Colonic mucosa (tissue), 4 donors: ENCODE measurements at regions of chr11 and their contacts with region 1.

Region 1: GRCh38 chr11:62905927-62906531 is 15.1 kb downstream of the CHRM1 start:
- DNase-seq: peak; percentile 86
- H3K4me3 ChIP-seq: no peak overlapping the region
- H3K27ac ChIP-seq: no peak overlapping the region
- H3K4me1 ChIP-seq: no peaks in the 10 kb centered on the region
- H3K27me3 ChIP-seq: no peaks in the 10 kb centered on the region
- CTCF ChIP-seq: peak; percentile 99

Region 2: DNA sequence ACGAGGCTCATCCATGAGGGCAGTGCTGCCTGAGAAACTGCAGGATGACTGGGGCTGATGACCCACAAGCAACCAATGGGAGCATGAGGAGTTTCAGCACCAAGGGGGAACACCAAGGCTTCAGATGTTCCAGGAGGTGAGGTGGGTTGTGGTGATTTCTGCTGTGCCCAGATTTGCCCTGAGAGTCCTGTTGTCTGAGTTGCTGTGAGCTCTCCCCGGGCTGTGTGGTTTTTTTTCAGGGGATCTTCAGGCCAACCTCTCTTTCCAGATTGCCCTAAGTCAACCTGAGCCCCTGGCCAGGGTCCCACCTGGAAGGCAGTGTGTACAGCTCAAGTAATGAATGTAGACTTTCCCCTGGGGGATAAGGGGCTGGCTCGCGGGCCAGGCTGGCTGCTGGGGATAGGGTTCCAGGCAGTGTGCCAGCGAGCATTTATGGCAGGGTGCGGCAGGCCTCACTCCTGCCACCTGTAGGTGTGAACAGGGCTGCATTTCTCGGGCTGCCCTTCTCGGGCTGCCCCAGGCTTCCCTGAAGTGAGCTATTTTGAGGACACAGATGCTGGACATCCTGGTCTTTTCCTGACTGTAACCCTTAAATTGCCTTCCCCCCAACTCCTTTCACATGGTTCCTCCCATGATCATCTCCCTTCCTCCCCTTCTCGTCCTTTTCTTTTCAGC is 69.0 kb after region 1 on chr11:
- intact Hi-C with region 1: loop called (anchors 2 kb)
- DNase-seq: peak; percentile 88
- H3K4me3 ChIP-seq: no peak overlapping the region
- H3K27ac ChIP-seq: no peak overlapping the region
- H3K4me1 ChIP-seq: no peaks in the 10 kb centered on the region
- H3K27me3 ChIP-seq: no peaks in the 10 kb centered on the region
- CTCF ChIP-seq: peak; percentile 50

Region 3: GRCh38 chr11:63023841-63024648 is 118.0 kb after region 1 on chr11:
- intact Hi-C with region 1: loop called (anchors 1 kb)
- DNase-seq: peak; percentile 88
- H3K4me3 ChIP-seq: no peak overlapping the region
- H3K27ac ChIP-seq: no peak overlapping the region
- H3K4me1 ChIP-seq: no peaks in the 10 kb centered on the region
- H3K27me3 ChIP-seq: no peaks in the 10 kb centered on the region
- CTCF ChIP-seq: peak; percentile 99

Region 4: GRCh38 chr11:63212742-63213141 is 306.7 kb after region 1 on chr11:
- intact Hi-C with region 1: loop called (anchors 5 kb)
- DNase-seq: no peak
- H3K4me3 ChIP-seq: no peak overlapping the region
- H3K27ac ChIP-seq: no peak overlapping the region
- H3K4me1 ChIP-seq: no peaks in the 10 kb centered on the region
- H3K27me3 ChIP-seq: no peaks in the 10 kb centered on the region
- CTCF ChIP-seq: peak; percentile 48